Head of caudate nucleus (tissue), 42 donors: ENCODE measurements at regions of chr17 and their contacts with region 1.

Region 1: GRCh38 chr17:71472809-71473789 is 647.7 kb upstream of the SOX9 start:
- DNase-seq: peak in 19 of 42 donors; percentile 4 to 62 (median 27)

Region 2: GRCh38 chr17:71760062-71760720 is 287.1 kb after region 1 on chr17:
- intact Hi-C with region 1: no loop called
- DNase-seq: no peak

Region 3: DNA sequence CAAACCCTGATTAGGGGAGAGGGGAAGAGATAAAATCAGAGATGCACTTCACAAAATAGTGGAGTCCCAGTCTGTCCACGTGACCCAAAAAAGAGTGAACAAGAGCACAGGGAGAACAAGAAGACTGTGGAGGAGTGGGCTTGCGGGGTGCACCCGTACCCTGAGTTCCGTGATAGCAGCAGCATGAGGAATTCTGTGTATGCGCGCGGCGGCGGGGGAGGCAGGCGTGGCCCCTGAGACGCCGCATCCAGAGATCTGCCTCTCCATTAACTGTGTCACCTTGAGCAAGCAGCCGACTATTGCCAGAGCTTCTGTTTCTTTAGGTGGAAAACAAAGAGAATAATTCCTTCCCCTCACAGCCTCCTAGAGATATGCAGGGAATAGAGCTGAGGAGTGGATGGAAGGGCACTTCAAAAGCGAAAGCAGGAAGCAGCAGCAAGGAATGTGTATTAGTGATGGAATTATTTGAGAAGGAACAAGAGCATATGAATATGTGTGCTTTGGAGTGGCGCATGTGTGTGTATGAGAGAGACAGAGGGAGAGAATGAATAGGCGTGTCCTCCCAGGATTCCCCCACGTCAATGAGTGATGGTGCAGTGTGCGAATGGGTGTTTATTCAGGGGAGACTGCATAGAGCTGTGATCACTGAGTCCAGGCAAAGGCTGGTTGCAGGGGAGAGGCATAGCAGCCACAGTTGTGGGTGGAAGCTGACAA is 637.3 kb after region 1 on chr17:
- intact Hi-C with region 1: loop called (anchors 5 kb)
- DNase-seq: peak in 3 of 42 donors; percentile 22 to 40 (median 39)

Region 4: DNA sequence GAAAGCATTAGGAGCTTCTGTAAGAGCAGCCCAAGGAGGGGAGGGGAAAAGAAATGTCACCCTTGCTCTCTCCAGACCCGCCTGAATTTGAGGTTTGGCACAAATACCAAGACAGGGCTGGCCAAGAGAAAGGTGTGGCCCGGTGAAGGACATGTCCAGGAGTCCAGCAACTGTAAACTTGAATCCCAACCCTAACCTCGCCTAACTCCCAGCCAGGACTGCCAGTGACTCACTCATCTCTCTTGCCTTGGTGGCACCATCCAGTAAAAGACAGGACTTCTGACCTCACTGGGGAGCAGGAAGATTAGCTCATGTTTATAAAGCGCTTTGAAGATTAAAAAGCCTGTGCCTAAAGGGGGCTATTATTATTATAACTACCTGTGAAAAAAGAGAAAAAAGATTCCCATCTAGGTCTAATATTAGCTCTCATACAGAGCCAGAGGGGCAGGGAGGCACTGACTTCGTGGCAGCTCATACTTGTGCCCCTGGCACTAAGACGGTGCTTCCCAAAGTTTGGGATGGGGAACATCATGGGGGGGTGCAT is 983.0 kb after region 1 on chr17:
- intact Hi-C with region 1: no loop called
- DNase-seq: no peak